Esophagus muscularis mucosa (tissue), 4 donors: ENCODE measurements at regions of chr16 and their contacts with region 1.

Region 1: DNA sequence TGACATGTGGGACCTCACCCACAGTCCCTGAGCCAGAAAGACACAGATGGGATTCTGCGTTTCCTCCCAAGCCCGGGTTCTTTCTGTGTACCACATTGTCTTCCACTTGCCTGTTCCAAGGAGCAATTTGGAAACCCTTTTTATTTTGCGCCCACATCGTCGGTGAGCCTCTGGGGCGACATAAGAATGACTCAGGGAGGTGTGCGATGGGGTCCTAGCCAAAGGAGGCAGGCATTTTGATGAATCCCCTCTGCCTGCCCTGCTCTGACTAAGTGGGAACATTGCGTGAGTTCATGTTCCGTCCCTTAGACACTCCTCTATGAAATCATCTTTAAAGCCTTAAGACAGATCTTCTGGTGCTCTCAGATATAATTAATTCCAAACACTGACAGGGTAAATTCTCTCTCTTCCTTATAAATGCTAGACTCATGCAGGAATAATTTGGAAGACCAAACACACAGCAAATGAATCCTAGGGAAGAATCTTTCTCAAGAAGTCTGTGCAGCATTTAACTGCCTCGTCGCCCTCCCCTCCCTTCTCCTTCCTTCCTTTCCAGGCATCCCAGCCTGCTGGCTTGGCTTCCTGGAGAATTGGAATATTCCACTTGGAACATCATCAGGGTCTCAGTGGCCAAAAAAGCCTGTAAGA is 52.7 kb upstream of the FOXF1 start:
- DNase-seq: peak; percentile 95
- H3K4me3 ChIP-seq: no peak overlapping the region
- H3K27ac ChIP-seq: peak overlapping the region; percentile 71 to 84 (median 80)
- H3K4me1 ChIP-seq: peaks cover 2 to 53% (median 46%) of the 10 kb centered on the region in 4 donors
- H3K27me3 ChIP-seq: peaks cover 0 to 4% (median 0%) of the 10 kb centered on the region in 4 donors
- CTCF ChIP-seq: no peak
- EP300 ChIP-seq: peak; percentile 73
- POLR2A ChIP-seq: no peak

Region 2: DNA sequence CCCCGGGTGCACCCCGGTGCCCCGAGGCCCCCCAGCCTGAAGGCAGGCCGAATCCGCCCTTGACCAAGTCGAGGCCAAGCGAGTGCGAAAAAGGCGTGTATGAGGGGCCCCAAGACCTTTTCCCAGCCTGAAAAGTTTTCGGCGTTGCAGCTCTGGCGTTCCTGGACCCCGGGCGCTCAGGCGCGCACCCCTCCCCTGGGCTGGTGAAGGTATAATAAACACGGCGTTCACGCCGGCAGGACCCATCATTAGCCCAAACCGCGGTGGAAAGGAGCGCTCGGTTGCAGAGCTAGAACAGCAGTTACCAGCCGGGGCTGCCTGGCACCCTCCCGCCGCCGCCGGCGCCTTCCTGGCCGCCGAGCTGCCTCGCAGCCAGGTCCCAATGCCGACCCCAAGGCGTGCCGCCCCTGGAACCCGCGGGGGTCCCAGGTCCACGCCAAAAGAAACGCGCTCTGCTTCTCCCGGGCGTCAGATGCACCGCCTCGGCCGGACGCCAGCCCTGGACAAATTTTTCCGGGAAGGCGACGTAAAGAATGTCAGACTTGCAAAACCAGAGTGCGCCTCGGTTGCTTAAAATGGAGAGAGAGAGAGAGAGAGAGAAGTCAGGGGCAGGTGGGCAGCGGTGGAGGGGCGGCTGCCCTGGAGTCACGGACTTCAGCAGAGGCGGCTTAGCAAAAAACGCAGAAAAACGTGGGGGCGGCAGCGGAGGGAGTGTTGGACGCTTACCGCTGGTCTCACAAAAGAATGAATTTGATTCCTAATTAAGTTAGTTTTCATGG is 41.2 kb after region 1 on chr16:
- intact Hi-C with region 1: loop called (anchors 5 kb)
- DNase-seq: no peak
- H3K4me3 ChIP-seq: peak overlapping the region; percentile 55 to 81 (median 64)
- H3K27ac ChIP-seq: peak overlapping the region; percentile 95 to 100 (median 98)
- H3K4me1 ChIP-seq: peaks cover 16 to 96% (median 92%) of the 10 kb centered on the region in 4 donors
- H3K27me3 ChIP-seq: peaks cover 0 to 77% (median 4%) of the 10 kb centered on the region in 4 donors
- CTCF ChIP-seq: no peak
- EP300 ChIP-seq: peak; percentile 63
- POLR2A ChIP-seq: peak; percentile 28

Region 3: DNA sequence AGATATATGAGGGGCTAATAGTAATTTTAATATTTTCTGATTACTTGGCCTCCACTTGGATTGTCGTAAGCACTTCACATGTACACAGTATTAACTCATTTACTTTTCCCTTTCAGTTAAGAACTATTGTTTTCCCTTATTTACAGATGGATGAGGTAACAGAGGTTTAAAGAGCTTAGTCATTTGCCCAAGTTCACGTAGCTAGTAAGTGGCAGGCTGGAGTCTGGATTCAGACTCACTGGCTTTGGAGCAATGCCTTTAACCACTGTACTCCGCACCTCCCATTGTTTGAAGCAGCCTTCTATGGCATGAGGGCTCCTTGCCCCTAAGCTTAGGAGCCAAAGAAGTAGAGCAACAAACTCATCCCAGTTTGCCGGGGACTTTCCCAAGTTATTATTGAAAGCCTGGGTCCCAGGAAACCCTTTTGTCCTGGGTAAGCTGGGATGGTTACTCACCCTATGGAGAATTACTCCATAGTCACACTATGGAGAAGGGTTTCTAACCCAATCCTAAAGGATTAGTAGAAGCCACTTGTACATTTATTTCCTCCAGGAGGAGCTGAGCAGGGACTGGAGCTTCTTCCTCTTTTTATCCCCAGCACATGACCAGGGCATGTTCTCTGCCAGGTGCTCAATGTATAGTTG is 133.0 kb after region 1 on chr16:
- intact Hi-C with region 1: no loop called
- DNase-seq: no peak
- H3K4me3 ChIP-seq: no peak overlapping the region
- H3K27ac ChIP-seq: no peak overlapping the region
- H3K4me1 ChIP-seq: peaks cover 0 to 15% (median 10%) of the 10 kb centered on the region in 4 donors
- H3K27me3 ChIP-seq: peaks cover 0 to 82% (median 26%) of the 10 kb centered on the region in 4 donors
- CTCF ChIP-seq: no peak
- EP300 ChIP-seq: no peak
- POLR2A ChIP-seq: no peak